CD14-positive monocyte (primary cell): ENCODE measurements at regions of chr17 and their contacts with region 1.

Region 1: DNA sequence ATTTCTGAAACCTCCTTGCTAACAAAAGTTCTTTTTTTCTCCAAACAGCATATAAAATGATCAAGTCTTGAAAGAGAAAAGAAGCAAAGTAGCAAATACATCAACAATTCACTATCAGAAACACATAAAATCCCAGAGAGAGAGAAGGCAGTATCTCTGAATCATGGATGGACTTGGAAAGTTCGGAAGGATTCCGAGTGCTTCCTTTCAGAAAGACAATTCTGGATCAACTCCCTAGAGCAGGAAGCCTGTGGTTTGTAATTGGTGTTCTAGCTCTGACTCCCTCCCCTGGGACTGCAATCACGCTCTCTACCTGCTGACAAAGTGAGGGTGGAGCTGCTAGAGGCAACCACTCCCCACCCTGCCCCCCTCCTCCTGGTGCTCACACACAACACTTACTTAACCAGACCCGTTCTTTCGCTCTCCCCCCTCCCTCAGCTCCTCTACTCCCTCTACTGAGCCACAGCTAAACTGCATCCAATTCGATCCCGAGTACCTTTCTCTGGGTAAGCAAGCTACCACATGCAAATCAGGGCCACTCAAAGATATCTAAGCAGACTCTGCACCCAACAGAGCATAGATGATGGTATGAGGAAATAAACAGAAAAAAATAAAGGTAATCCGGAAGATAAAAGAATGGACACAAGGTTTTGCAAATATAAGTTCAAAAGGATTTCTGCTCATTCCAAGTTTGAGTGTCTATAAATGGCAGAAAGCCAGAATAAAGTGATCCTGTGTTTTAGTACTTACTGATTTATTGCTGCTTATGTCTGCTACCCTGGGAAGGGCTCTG is at the start of gene RNF43:
- DNase-seq: peak; percentile 67 to 78 (median 72)
- H3K4me3 ChIP-seq: no peak within 1 kb of the TSS
- H3K4me3 Mint-ChIP-seq: peak within 1 kb of the TSS in 1 of 2 donors; percentile 53
- H3K27ac ChIP-seq: no peak within 1 kb of the TSS
- H3K27ac Mint-ChIP-seq: peak within 1 kb of the TSS in 1 of 7 donors; percentile 27
- H3K4me1 ChIP-seq: peaks cover 4 to 6% of the 10 kb centered on the region in 2 donors
- H3K4me1 Mint-ChIP-seq: peaks cover 11% of the 10 kb centered on the region
- H3K27me3 ChIP-seq: no peaks in the 10 kb centered on the region
- H3K27me3 Mint-ChIP-seq: peaks cover 3 to 10% (median 7%) of the 10 kb centered on the region in 3 donors
- CTCF ChIP-seq: peak; percentile 80
- polyA plus RNA-seq, gene RNF43: 0.01 to 0.11 TPM in 2 of 3 donors, not detected in the other

Region 2: GRCh38 chr17:58277107-58277801 is 140.2 kb before region 1 on chr17:
- intact Hi-C with region 1: loop called in 1 of 2 experiments (anchors 5 kb)
- DNase-seq: peak in 2 of 3 donors; percentile 38 to 49
- H3K4me3 ChIP-seq: peak overlapping the region in 2 of 3 experiments; percentile 3 to 74
- H3K4me3 Mint-ChIP-seq: peak overlapping the region; percentile 76 to 93
- H3K27ac ChIP-seq: peak overlapping the region; percentile 69 to 84
- H3K27ac Mint-ChIP-seq: peak overlapping the region in 6 of 7 donors; percentile 82 to 98 (median 93)
- H3K4me1 ChIP-seq: peaks cover 85 to 91% of the 10 kb centered on the region in 2 donors
- H3K4me1 Mint-ChIP-seq: peaks cover 89% of the 10 kb centered on the region
- H3K27me3 ChIP-seq: no peaks in the 10 kb centered on the region
- H3K27me3 Mint-ChIP-seq: peaks cover 0 to 3% (median 3%) of the 10 kb centered on the region in 3 donors
- CTCF ChIP-seq: peak; percentile 83

Region 3: GRCh38 chr17:58352014-58352842 is 65.3 kb before region 1 on chr17 and contains the start of gene SUPT4H1:
- intact Hi-C with region 1: loop called in 1 of 2 experiments (anchors 5 kb)
- DNase-seq: peak; percentile 91 to 92 (median 92)
- H3K4me3 ChIP-seq: peak within 1 kb of the TSS; percentile 79 to 97 (median 94)
- H3K4me3 Mint-ChIP-seq: peak within 1 kb of the TSS; percentile 100
- H3K27ac ChIP-seq: peak within 1 kb of the TSS; percentile 89 to 95
- H3K27ac Mint-ChIP-seq: peak within 1 kb of the TSS; percentile 98 to 100 (median 99)
- H3K4me1 ChIP-seq: peaks cover 25 to 38% of the 10 kb centered on the region in 2 donors
- H3K4me1 Mint-ChIP-seq: peaks cover 44% of the 10 kb centered on the region
- H3K27me3 ChIP-seq: no peaks in the 10 kb centered on the region
- H3K27me3 Mint-ChIP-seq: peaks cover 0 to 2% (median under 1%) of the 10 kb centered on the region in 3 donors
- CTCF ChIP-seq: no peak
- polyA plus RNA-seq, gene SUPT4H1: 144 to 251 (median 241) TPM

Region 4: DNA sequence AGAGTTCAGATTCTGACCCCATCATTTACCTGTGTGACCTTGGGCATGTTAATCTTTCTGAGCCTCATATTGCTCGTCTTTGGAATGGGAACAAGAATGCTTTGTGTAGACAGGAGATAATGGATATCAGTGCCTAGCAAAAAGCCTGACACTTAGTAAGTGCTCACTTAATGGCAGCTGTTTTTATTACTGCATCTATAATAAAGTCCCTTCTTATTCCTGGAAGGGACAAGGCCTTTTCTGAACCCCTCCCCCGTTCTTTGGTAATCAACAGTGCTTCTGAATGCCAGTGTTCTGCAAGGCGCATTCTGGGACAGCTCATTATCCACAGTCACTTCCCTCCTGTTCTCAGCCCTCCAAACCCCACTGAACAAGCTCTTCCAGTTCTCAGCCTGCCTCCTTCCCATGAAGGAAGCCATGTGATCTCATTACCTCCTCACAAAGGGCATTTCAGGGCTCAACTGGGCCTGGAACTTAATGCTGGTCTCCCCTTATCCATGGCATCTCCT is 40.3 kb before region 1 on chr17:
- intact Hi-C with region 1: no loop called
- DNase-seq: no peak
- H3K4me3 ChIP-seq: no peak overlapping the region
- H3K4me3 Mint-ChIP-seq: no peak overlapping the region
- H3K27ac ChIP-seq: no peak overlapping the region
- H3K27ac Mint-ChIP-seq: peak overlapping the region in 3 of 7 donors; percentile 21 to 69 (median 54)
- H3K4me1 ChIP-seq: peaks cover 26 to 30% of the 10 kb centered on the region in 2 donors
- H3K4me1 Mint-ChIP-seq: peaks cover 33% of the 10 kb centered on the region
- H3K27me3 ChIP-seq: no peaks in the 10 kb centered on the region
- H3K27me3 Mint-ChIP-seq: peaks cover 2 to 19% (median 15%) of the 10 kb centered on the region in 3 donors
- CTCF ChIP-seq: no peak